ENCODE measurements at regions of chr4 and their contacts with region 1.

Region 1: GRCh38 chr4:22911285-22911684 is 218.5 kb downstream of the GBA3 start:
- DNase-seq: no peak
- ATAC-seq: no peak
- H3K4me3 Mint-ChIP-seq: no peak overlapping the region
- H3K27ac Mint-ChIP-seq: no peak overlapping the region
- H3K4me1 Mint-ChIP-seq: no peaks in the 10 kb centered on the region
- H3K27me3 Mint-ChIP-seq: no peaks in the 10 kb centered on the region
- CTCF ChIP-seq: no peak

Region 2: GRCh38 chr4:22766068-22766467 is 145.2 kb before region 1 on chr4:
- CTCF ChIA-PET with region 1: no interaction called
- POLR2A ChIA-PET with region 1: no interaction called
- intact Hi-C with region 1: no loop called
- DNase-seq: no peak
- ATAC-seq: no peak
- H3K4me3 Mint-ChIP-seq: no peak overlapping the region
- H3K27ac Mint-ChIP-seq: no peak overlapping the region
- H3K4me1 Mint-ChIP-seq: peaks cover 3% of the 10 kb centered on the region
- H3K27me3 Mint-ChIP-seq: peaks cover 2% of the 10 kb centered on the region
- CTCF ChIP-seq: no peak

Region 3: GRCh38 chr4:22897520-22898108 is 13.7 kb before region 1 on chr4:
- CTCF ChIA-PET with region 1: interaction called, 17 read pairs
- POLR2A ChIA-PET with region 1: no interaction called
- intact Hi-C with region 1: no loop called
- DNase-seq: peak; percentile 3
- ATAC-seq: no peak
- H3K4me3 Mint-ChIP-seq: no peak overlapping the region
- H3K27ac Mint-ChIP-seq: no peak overlapping the region
- H3K4me1 Mint-ChIP-seq: no peaks in the 10 kb centered on the region
- H3K27me3 Mint-ChIP-seq: peaks cover 5% of the 10 kb centered on the region
- CTCF ChIP-seq: peak; percentile 77

Region 4: GRCh38 chr4:22969314-22969896 is 58.1 kb after region 1 on chr4:
- CTCF ChIA-PET with region 1: no interaction called
- POLR2A ChIA-PET with region 1: no interaction called
- intact Hi-C with region 1: no loop called
- DNase-seq: no peak
- ATAC-seq: no peak
- H3K4me3 Mint-ChIP-seq: no peak overlapping the region
- H3K27ac Mint-ChIP-seq: no peak overlapping the region
- H3K4me1 Mint-ChIP-seq: no peaks in the 10 kb centered on the region
- H3K27me3 Mint-ChIP-seq: no peaks in the 10 kb centered on the region
- CTCF ChIP-seq: no peak